Mammary epithelial cell (primary cell): ENCODE measurements at regions of chr1 and their contacts with region 1.

Region 1: GRCh38 chr1:37682334-37682987 is 9.9 kb upstream of the CDCA8 start:
- DNase-seq: peak; percentile 47
- H3K4me3 ChIP-seq: no peak overlapping the region
- H3K27ac ChIP-seq: no peak overlapping the region
- H3K4me1 ChIP-seq: no peaks in the 10 kb centered on the region
- H3K27me3 ChIP-seq: no peaks in the 10 kb centered on the region
- CTCF ChIP-seq: peak; percentile 81 to 82

Region 2: DNA sequence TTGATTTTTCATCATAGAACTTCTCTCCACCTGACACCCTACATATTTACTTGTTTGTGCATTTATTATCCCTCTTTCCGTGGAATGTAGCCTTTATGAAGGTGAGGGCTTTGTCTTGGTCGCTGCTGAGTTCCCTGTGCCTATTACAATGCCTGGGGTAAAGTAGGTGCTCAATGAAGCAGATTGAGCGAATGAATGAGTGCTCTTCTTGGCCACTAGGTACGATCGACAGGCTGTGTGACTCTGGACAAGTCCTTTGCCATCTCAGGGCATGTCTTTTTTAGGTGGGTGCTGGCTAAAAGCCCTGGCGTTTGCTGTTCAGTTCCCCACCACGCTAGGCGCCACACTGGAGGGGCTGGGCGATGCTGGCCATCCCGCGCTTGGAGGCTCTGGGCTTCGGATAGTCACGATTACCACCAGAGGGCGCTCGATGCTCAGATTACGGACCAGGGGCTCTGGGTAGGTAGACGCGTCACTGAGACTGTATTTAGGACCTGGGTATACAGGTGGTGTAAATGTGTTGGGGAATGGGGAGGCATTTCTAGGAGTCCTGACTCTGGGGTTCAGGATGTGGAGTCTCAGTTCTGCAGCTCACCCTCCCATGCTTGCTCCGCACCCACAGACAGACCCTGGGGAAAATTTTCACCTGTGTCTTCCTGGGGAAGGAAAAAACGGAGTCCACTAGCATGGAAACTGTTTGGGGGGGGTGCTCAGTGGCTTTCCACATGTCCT is 1128.7 kb before region 1 on chr1:
- CTCF ChIA-PET with region 1: no interaction called
- dilution Hi-C with region 1: no loop called
- in situ Hi-C with region 1: no loop called
- intact Hi-C with region 1: loop called (anchors 10 kb)
- DNase-seq: peak; percentile 41
- H3K4me3 ChIP-seq: no peak overlapping the region
- H3K27ac ChIP-seq: no peak overlapping the region
- H3K4me1 ChIP-seq: no peaks in the 10 kb centered on the region
- H3K27me3 ChIP-seq: no peaks in the 10 kb centered on the region
- CTCF ChIP-seq: peak; percentile 65 to 79

Region 3: GRCh38 chr1:37458528-37458927 is 223.9 kb before region 1 on chr1:
- CTCF ChIA-PET with region 1: no interaction called
- dilution Hi-C with region 1: no loop called
- in situ Hi-C with region 1: loop called (anchors 10 to 25 kb)
- intact Hi-C with region 1: loop called (anchors 1 kb)
- DNase-seq: no peak
- H3K4me3 ChIP-seq: no peak overlapping the region
- H3K27ac ChIP-seq: no peak overlapping the region
- H3K4me1 ChIP-seq: peaks cover 10% of the 10 kb centered on the region
- H3K27me3 ChIP-seq: no peaks in the 10 kb centered on the region
- CTCF ChIP-seq: peak in 1 of 2 donors; percentile 25

Region 4: DNA sequence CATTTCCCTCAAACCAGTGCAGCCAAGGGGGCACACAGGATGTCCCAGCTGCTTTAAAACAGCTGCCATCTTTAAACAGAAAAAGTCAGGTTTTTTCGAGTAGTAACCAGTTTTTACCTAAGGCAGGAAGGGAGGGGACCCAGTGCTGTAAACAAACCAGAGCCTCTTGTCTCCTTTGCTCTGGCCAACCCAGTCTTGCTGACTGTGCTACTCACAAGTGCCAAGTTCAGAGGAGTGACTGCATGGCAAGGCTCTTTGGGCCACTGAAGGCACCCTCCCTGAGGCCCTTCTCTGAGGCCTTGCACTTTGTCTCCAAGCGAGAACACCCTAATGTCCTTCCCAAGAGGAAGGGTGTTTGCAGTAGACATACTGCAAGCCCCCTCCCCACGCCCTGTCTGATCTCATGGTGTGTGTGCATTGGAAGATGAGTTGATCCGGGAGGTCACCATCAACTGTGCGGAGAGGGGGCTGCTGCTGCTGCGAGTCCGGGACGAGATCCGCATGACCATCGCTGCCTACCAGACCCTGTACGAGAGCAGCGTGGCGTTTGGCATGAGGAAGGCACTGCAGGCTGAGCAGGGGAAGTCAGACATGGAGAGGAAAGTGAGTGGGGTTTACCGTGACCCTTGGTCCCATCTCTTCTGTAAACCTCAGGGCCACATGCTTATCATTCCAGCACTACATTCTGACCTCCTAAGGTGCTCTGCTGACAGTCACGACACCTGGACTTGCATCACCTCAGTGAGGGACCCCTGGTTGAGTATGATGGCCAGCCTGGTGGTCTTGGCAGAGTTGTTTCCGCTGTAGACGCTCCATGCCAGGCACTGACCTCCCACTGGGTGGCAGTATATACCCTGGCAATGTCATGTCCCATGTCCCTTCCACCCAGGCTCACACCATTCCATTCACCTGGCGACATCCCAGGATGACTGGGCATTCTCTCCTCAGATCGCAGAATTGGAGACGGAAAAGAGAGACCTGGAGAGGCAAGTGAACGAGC is 121.0 kb before region 1 on chr1:
- CTCF ChIA-PET with region 1: no interaction called
- dilution Hi-C with region 1: no loop called
- in situ Hi-C with region 1: no loop called
- intact Hi-C with region 1: loop called (anchors 1 kb)
- DNase-seq: no peak
- H3K4me3 ChIP-seq: no peak overlapping the region
- H3K27ac ChIP-seq: no peak overlapping the region
- H3K4me1 ChIP-seq: no peaks in the 10 kb centered on the region
- H3K27me3 ChIP-seq: no peaks in the 10 kb centered on the region
- CTCF ChIP-seq: peak; percentile 58 to 62

Region 5: GRCh38 chr1:37602750-37603694 is 79.4 kb before region 1 on chr1:
- CTCF ChIA-PET with region 1: no interaction called
- dilution Hi-C with region 1: no loop called
- in situ Hi-C with region 1: loop called (anchors 5 to 10 kb)
- intact Hi-C with region 1: loop called (anchors 1 kb)
- DNase-seq: no peak
- H3K4me3 ChIP-seq: no peak overlapping the region
- H3K27ac ChIP-seq: no peak overlapping the region
- H3K4me1 ChIP-seq: no peaks in the 10 kb centered on the region
- H3K27me3 ChIP-seq: peaks cover 3% of the 10 kb centered on the region
- CTCF ChIP-seq: peak; percentile 61 to 74

Region 6: DNA sequence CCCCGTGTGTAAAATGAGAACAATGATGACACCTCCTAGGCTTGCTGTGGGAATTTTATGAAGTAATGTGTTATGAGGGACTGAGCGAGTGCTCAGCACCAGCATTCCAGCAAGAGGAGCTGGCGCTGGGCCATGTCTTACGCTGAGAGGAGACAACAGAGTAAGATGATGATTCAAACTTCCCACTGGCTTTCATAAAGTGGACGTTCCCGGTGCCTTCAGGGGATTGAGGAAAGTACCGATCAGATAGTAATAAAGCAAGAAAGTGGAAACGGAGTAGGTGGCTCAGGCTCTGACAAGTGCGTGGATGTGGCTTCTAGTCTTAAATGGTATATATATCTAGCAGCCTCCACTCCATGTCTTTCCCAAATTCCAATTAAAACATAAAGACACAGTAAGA is 58.7 kb after region 1 on chr1:
- CTCF ChIA-PET with region 1: no interaction called
- dilution Hi-C with region 1: no loop called
- in situ Hi-C with region 1: no loop called
- intact Hi-C with region 1: no loop called
- DNase-seq: peak; percentile 94
- H3K4me3 ChIP-seq: no peak overlapping the region
- H3K27ac ChIP-seq: no peak overlapping the region
- H3K4me1 ChIP-seq: peaks cover 11% of the 10 kb centered on the region
- H3K27me3 ChIP-seq: no peaks in the 10 kb centered on the region
- CTCF ChIP-seq: no peak